T-cell (primary cell): ENCODE measurements at regions of chr11 and their contacts with region 1.

Region 1: GRCh38 chr11:125273519-125274000 is 109.0 kb downstream of the PKNOX2 start:
- DNase-seq: no peak
- ATAC-seq: no peak
- H3K4me3 ChIP-seq: no peak overlapping the region
- H3K4me3 Mint-ChIP-seq: no peak overlapping the region
- H3K27ac ChIP-seq: no peak overlapping the region
- H3K27ac Mint-ChIP-seq: no peak overlapping the region
- H3K4me1 ChIP-seq: no peaks in the 10 kb centered on the region
- H3K4me1 Mint-ChIP-seq: no peaks in the 10 kb centered on the region
- H3K27me3 ChIP-seq: peaks cover 2 to 3% of the 10 kb centered on the region in 2 experiments
- H3K27me3 Mint-ChIP-seq: peaks cover 13 to 22% of the 10 kb centered on the region in 2 donors

Region 2: DNA sequence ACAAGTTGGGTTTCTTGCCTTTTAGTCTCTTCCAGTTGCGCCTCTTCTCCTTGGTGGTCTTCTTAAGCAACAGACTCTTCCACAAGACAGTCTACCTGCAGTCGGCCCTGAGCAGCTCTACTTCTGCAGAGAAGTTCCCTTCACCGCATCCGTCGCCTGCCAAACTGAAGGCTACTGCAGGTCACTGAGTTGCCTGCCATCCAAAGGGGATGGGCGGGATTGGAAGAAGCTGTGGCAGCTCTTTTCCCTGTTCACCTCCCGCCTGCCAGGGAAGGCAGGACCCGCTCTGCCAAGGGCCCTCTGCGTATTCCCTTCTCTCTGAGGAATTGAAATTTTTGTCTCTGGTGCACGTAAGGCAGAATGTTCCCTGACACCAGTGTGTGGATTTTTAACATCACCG is 309.9 kb after region 1 on chr11:
- CTCF ChIA-PET with region 1: no interaction called
- POLR2A ChIA-PET with region 1: interaction called in 1 of 2 experiments, 12 read pairs
- DNase-seq: no peak
- ATAC-seq: no peak
- H3K4me3 ChIP-seq: no peak overlapping the region
- H3K4me3 Mint-ChIP-seq: no peak overlapping the region
- H3K27ac ChIP-seq: no peak overlapping the region
- H3K27ac Mint-ChIP-seq: no peak overlapping the region
- H3K4me1 ChIP-seq: no peaks in the 10 kb centered on the region
- H3K4me1 Mint-ChIP-seq: peaks cover 0 to 2% (median 0%) of the 10 kb centered on the region in 3 donors
- H3K27me3 ChIP-seq: no peaks in the 10 kb centered on the region
- H3K27me3 Mint-ChIP-seq: no peaks in the 10 kb centered on the region